ENCODE measurements at regions of chr2 and their contacts with region 1.

Region 1: DNA sequence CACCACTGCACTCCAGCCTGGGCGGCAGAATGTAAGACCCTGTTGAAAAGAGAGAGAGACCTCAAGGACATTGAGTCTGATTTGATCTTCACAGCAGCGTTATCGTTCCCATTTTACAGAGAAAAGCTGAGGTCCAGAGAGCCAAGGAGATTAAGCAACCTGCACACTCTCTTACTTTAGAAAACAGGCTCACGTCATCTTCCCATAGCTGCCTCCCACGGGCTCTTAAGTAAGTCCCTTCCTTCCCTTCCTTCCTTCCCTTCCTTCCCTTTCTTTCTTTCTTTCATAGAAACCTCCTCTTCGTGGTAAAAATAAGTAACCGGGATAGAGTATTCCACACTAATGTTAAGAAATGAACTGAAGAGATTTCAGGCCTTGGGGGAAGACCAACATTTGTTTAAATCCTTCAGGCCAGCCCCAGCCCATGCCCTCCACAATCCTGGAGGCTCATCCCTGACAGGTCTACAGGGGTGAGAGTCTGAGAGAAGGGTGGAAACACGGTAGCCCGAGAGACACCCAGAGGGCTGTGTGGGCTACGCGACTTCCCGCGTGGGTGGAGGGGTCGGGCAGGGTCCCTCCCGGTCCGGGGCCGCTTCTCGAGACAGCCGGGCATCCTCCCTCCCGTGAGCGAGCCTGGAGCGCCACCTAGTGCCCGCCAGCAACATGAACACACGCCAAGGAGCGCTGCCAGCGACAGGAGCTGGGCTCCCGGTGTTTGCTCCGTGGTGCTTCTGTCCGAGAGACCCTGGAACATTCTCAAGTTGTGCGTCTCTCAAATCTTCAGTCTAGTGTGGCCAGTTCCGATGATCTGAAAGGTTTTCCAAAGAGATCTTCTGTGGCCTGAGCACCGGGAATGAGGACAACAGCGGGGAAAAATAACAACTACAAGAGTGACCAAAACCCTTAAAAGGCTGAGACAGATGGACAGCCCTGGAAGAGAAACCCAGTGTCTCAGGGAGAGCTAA is 160.3 kb downstream of the INO80D start:
- DNase-seq: peak; percentile 52 to 96 (median 76)

Region 2: GRCh38 chr2:204024503-204024902 is 1901.2 kb before region 1 on chr2:
- intact Hi-C with region 1: loop called (anchors 10 kb)
- DNase-seq: peak in 2 of 10 donors; percentile 12 to 22

Region 3: GRCh38 chr2:204325468-204325867 is 1600.2 kb before region 1 on chr2:
- intact Hi-C with region 1: loop called (anchors 10 kb)
- DNase-seq: peak in 7 of 10 donors; percentile 32 to 90 (median 53)

Region 4: GRCh38 chr2:205680067-205680466 is 245.6 kb before region 1 on chr2:
- intact Hi-C with region 1: loop called (anchors 5 kb)
- DNase-seq: peak in 4 of 10 donors; percentile 33 to 77 (median 40)

Region 5: GRCh38 chr2:205776139-205776538 is 149.5 kb before region 1 on chr2:
- intact Hi-C with region 1: loop called (anchors 1 kb)
- DNase-seq: peak in 7 of 10 donors; percentile 14 to 84 (median 54)

Region 6: DNA sequence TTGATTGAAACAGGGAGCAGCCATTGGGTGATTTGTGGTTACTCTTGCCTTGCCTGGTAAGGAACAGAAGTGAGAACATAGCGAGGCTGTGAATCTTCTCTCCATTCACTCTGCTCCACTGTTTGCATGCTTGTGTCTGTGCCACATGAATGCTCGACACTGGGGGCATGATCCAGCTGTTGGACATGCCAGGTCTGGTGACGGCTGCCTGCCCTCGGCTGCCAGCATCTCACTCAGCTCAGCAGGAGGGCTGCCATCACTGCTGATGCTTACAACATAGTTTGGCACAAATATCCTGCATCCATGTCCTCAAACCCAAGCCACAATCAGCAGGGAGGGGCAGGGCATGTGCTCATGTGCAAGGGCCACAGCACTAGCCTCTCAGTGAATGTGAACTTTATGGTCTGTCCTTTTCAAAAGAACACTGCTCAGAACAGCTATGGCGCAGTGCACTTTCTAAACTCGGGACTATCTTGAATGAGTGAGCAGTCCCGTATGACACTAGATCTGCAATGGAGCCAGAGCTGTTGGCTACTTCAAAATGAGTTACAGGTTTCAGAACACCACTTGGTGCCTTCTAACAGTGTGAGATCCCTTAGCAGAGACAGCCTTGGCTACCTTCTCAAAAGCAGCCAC is 117.1 kb before region 1 on chr2:
- intact Hi-C with region 1: no loop called
- DNase-seq: no peak

Region 7: GRCh38 chr2:205878999-205879761 is 46.5 kb before region 1 on chr2:
- intact Hi-C with region 1: no loop called
- DNase-seq: peak in 3 of 10 donors; percentile 17 to 85 (median 82)